Sigmoid colon (tissue), 7 donors: ENCODE measurements at regions of chr1 and their contacts with region 1.

Region 1: DNA sequence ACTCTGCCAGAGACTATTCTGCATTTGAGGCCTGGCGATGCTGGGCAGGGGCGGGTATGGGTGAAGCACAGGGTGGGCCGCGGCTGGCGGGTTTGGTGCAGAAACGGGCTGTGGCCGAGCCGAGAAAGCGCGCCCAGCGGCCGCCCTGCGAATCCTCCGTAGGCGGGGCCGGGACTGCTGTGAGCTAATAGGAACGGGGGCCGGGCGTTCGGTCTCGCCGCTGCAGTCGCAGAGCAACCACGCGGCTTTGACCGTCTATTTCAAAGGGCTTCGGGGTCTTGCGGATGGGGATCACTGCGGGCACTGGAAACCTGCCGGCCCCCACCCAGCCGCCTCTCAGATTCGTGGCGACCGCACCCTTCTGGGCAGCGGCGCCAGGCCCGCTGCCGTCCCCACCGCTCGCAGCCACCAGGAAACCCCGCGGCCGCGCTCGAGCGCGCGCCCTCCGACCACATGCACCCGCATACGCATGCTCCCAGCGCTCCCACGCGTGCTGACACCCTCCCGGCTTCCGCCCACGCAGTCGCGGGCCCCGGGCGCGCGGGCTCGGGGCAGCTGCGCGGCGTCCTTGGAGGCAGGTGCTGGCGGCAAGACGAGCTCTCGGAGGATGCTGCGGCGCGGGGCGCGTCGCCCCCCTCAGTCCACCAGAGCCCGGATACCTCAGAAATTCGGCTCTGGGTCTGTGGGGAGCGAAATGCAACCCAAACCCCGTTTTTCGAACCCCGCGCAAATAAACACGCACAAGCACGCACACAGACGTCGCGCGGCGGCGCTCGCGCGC is 32.6 kb downstream of the DNTTIP2 start:
- DNase-seq: peak; percentile 95
- H3K4me3 ChIP-seq: peak overlapping the region; percentile 65 to 85 (median 70)
- H3K27ac ChIP-seq: peak overlapping the region; percentile 94 to 99 (median 97)
- H3K4me1 ChIP-seq: peaks cover 0 to 32% (median 30%) of the 10 kb centered on the region in 4 donors
- H3K27me3 ChIP-seq: no peaks in the 10 kb centered on the region
- CTCF ChIP-seq: peak in 2 of 4 experiments; percentile 38 to 46
- EP300 ChIP-seq: no peak
- POLR2A ChIP-seq: peak; percentile 37 to 41

Region 2: GRCh38 chr1:93304716-93305138 is 541.7 kb before region 1 on chr1:
- intact Hi-C with region 1: loop called (anchors 10 kb)
- DNase-seq: no peak
- H3K4me3 ChIP-seq: no peak overlapping the region
- H3K27ac ChIP-seq: no peak overlapping the region
- H3K4me1 ChIP-seq: no peaks in the 10 kb centered on the region
- H3K27me3 ChIP-seq: no peaks in the 10 kb centered on the region
- CTCF ChIP-seq: peak; percentile 70 to 84 (median 78)
- EP300 ChIP-seq: no peak
- POLR2A ChIP-seq: no peak

Region 3: GRCh38 chr1:93447516-93448291 is 398.7 kb before region 1 on chr1 and contains the start of gene FNBP1L:
- intact Hi-C with region 1: loop called (anchors 2 kb)
- DNase-seq: peak; percentile 77
- H3K4me3 ChIP-seq: peak within 1 kb of the TSS; percentile 90 to 98 (median 94)
- H3K27ac ChIP-seq: peak within 1 kb of the TSS; percentile 78 to 81 (median 80)
- H3K4me1 ChIP-seq: peaks cover 0 to 17% (median 13%) of the 10 kb centered on the region in 4 donors
- H3K27me3 ChIP-seq: no peaks in the 10 kb centered on the region
- CTCF ChIP-seq: no peak
- EP300 ChIP-seq: no peak
- POLR2A ChIP-seq: no peak
- total RNA-seq, gene FNBP1L: 13.4 to 26.3 (median 18.4) TPM

Region 4: DNA sequence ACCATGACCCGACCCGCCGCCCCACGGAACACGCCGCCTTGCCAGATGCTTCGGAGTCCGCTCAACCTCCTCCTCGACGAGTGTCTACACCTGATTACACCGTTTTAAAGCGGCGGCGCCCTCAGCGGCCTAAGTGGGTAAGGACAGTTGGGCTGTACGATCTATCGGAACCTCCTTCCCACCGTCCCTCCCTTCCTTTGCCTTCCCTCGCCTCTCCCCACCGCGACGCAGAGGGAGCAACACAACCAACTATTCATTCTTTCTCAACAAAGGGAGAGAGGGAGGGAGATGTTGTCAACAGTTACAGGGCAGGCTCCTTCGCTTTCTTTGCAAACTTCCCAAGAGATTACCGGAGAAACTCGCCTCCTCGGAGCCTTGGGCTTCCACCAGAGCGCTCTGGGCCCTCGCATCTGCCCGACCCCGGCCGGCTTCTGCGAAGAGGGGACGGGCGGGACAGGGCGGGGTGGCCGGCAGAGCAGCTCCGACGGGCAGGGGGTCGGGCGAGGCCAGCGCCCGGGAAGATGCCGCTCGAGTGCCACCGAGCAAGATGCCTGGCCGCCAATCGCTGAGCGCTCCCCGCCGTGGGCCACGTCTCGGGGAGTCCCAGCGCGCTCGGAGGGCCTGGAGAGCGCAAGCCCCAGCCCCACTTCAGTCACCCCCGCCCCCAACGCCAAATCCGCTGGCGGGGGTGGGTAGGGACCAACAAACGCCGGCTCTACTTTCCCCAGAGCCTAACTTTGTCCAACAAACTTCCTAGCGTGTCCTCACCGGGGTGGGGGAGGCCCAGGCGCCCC is 165.4 kb before region 1 on chr1:
- intact Hi-C with region 1: loop called (anchors 2 kb)
- DNase-seq: peak; percentile 91
- H3K4me3 ChIP-seq: peak overlapping the region; percentile 81 to 90 (median 88)
- H3K27ac ChIP-seq: peak overlapping the region; percentile 80 to 93 (median 90)
- H3K4me1 ChIP-seq: peaks cover 0 to 30% (median 11%) of the 10 kb centered on the region in 4 donors
- H3K27me3 ChIP-seq: no peaks in the 10 kb centered on the region
- CTCF ChIP-seq: peak; percentile 25 to 78 (median 68)
- EP300 ChIP-seq: no peak
- POLR2A ChIP-seq: peak in 1 of 2 donors; percentile 19

Region 5: GRCh38 chr1:94417978-94418663 is 571.7 kb after region 1 on chr1 and contains the start of gene ABCD3:
- intact Hi-C with region 1: loop called (anchors 5 kb)
- DNase-seq: peak; percentile 99
- H3K4me3 ChIP-seq: peak within 1 kb of the TSS; percentile 89 to 97 (median 96)
- H3K27ac ChIP-seq: peak within 1 kb of the TSS; percentile 92 to 96 (median 94)
- H3K4me1 ChIP-seq: peaks cover 0 to 40% (median 32%) of the 10 kb centered on the region in 4 donors
- H3K27me3 ChIP-seq: no peaks in the 10 kb centered on the region
- CTCF ChIP-seq: no peak
- EP300 ChIP-seq: peak in 1 of 4 donors; percentile 22
- POLR2A ChIP-seq: peak; percentile 74 to 79
- total RNA-seq, gene ABCD3: 22.8 to 55.6 (median 31.7) TPM